ENCODE measurements at regions of chr22 and their contacts with region 1.

Region 1: DNA sequence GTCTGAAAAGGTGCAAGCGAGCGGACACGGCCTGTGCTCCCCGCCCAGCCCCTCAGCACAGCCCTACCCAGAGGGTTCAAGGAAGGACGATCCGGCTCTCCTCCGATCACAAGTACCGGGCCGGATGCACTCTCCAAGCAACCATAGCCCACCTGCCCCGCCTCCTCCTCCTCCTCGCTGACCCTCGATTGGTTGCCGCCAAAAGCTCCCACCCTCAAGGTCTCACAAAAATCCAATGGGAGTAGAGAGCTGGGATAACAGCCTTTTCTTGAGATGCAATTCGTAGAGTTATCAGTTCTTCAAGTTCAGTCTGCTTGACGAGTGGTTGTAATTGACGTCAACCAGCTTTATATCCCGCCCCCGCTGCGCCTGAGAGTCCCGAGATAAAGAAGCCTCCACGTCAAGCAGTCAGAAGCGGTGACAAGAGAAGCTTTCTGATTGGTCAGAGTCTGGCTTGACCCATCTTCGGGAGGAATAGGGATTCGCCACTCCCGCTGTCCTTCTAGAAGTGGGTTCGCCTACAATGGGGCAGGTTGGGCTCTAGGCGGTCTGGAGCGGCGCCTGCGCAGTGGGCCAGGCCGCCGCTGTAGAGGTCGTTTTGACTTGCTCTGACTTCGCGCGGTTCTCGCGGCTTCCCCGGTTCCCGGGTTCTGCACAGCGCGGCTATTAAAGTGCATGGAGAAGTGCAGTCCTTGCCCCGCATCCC is at the start of gene IFT27:
- DNase-seq: peak; percentile 100
- H3K4me3 ChIP-seq: peak within 1 kb of the TSS; percentile 69 to 93 (median 84)
- H3K27ac ChIP-seq: peak within 1 kb of the TSS; percentile 86 to 94 (median 86)
- H3K4me1 ChIP-seq: peaks cover 11 to 22% (median 20%) of the 10 kb centered on the region in 4 donors
- H3K27me3 ChIP-seq: no peaks in the 10 kb centered on the region
- CTCF ChIP-seq: no peak
- EP300 ChIP-seq: no peak
- POLR2A ChIP-seq: no peak
- total RNA-seq, gene IFT27: 15.2 to 24.1 (median 17.0) TPM

Region 2: DNA sequence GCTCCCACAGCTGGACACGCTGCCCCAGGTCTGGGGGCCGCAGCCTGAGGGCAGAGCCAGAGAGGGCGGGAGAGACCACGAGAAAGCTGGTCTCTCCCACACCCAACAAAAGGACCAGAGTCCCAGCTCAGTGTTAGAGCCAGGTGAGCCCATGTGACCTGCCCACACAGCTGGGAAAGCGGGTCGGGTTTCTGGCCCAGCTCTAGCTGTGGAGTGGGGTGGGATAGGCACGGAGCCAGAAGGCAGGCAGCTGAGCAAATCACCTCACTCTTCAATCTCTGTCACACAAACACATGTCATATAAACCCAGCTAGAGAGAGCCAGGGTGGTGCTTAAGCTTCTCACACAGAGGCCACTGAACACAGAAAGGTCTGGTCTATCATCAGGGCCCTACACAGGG is 239.4 kb before region 1 on chr22:
- intact Hi-C with region 1: loop called (anchors 10 kb)
- DNase-seq: no peak
- H3K4me3 ChIP-seq: no peak overlapping the region
- H3K27ac ChIP-seq: no peak overlapping the region
- H3K4me1 ChIP-seq: no peaks in the 10 kb centered on the region
- H3K27me3 ChIP-seq: peaks cover 0 to 31% (median 0%) of the 10 kb centered on the region in 4 donors
- CTCF ChIP-seq: no peak
- EP300 ChIP-seq: no peak
- POLR2A ChIP-seq: no peak

Region 3: DNA sequence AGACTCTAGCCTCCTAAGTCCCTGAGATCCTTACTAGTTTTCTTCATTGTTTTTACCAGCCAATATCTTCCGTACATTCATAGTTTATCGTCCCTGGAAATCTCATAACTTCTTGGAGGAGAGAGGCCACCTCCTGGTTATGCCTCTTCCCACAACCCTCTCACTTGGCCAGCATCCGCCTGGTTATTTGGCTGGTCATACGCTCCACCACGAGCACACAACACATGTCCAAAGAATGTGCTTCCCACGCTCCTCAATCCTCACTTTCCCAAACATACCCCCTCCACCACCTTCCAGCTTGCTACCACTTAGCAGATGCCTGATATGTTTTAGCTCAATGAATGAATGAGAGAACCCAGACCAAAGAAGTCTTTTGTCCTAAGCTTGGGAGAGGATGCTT is 163.7 kb before region 1 on chr22:
- intact Hi-C with region 1: no loop called
- DNase-seq: no peak
- H3K4me3 ChIP-seq: no peak overlapping the region
- H3K27ac ChIP-seq: no peak overlapping the region
- H3K4me1 ChIP-seq: peaks cover 0 to 3% (median 0%) of the 10 kb centered on the region in 4 donors
- H3K27me3 ChIP-seq: peaks cover 0 to 77% (median 6%) of the 10 kb centered on the region in 4 donors
- CTCF ChIP-seq: no peak
- EP300 ChIP-seq: no peak
- POLR2A ChIP-seq: no peak

Region 4: DNA sequence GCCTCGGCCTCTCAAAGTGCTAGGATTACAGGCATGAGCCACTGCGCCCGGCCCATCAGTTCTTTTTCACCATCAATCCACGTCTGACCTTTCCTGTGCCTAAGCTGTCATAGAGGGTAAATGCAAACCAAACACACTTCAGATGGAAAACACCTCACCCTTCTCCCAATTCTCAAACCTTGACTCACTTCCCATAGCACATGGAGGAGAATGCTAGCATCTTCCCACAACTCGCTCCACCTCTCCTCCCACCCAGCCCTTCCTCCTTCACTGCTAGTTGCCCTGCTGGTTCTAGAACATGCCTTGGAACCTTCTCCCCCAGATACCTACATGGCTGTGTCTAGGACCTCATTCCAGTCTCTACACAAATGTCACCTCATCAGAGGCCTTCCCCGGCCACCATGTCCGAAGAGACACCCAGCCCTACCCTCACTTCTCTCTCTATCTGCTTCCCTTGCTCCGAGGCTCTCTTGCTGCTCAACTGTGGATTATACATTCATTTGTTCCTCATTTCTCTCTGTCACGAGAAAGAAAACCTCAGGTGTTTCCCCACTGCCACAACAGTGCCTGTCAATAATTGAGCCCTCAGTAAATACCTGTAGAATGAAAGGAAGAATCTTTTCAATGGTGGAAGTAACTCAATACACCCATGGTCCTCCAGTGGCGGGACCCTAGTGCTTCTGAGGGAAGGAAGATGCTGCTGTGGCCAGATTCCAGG is 63.4 kb after region 1 on chr22:
- intact Hi-C with region 1: no loop called
- DNase-seq: no peak
- H3K4me3 ChIP-seq: no peak overlapping the region
- H3K27ac ChIP-seq: no peak overlapping the region
- H3K4me1 ChIP-seq: no peaks in the 10 kb centered on the region
- H3K27me3 ChIP-seq: peaks cover 0 to 41% (median 0%) of the 10 kb centered on the region in 4 donors
- CTCF ChIP-seq: no peak
- EP300 ChIP-seq: no peak
- POLR2A ChIP-seq: no peak

Region 5: DNA sequence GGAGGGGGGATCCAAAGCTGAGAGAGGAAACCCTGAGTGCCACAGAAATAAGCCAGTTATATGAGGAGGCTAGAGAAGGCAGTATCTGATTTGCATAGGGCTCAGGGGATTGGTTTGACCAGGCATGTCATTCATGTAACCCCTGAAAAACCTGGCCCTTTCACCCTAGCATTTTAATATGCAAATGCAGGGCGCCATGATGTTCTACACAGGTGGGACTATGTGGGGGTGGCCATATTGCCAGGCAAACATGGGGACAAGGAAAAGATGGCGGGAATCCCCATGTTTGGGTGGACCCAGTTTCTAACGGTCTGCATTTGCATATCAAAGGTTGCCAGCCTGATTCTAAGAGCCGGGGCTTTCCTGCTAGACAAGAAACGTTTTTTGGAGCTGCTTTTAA is 164.6 kb after region 1 on chr22:
- intact Hi-C with region 1: no loop called
- DNase-seq: no peak
- H3K4me3 ChIP-seq: no peak overlapping the region
- H3K27ac ChIP-seq: no peak overlapping the region
- H3K4me1 ChIP-seq: no peaks in the 10 kb centered on the region
- H3K27me3 ChIP-seq: peaks cover 0 to 18% (median 0%) of the 10 kb centered on the region in 4 donors
- CTCF ChIP-seq: no peak
- EP300 ChIP-seq: no peak
- POLR2A ChIP-seq: no peak

Region 6: DNA sequence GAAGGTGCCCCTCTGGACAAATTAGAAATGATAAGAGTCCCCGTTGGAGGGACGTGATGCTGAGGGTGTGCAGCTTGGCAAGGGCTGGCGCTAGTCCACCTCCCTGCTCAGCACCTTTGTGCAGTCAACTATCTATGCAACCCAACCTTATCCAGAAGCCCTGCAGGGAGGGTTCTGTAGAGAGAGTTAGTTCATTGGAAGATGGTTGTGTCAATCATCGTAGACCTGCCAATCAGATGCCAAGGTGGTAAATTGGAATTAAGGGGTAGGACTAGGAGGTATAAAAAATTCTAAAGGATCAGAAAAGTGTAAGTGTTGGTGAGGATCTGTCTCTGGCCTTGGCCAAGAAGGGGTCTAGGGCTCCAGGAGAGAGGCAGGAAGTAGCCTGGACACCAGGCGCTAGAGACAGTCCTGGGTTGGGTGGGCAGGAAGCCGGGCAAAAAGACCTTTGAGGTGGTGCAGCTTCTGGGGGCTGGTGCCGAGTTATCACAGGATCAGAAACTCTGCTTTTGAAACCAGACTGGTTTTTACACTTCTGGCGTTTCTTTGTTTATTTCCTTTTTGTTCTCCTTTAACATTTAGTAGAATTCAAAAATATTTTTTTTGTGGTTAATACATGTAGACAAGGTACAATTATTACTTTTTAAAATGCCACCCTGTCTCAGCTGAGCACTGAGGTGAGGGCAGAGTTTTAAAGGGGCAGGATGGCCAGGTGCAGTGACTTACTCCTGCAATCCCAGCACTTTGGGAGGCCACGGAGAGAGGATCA is 410.3 kb after region 1 on chr22:
- intact Hi-C with region 1: loop called (anchors 5 kb)
- DNase-seq: no peak
- H3K4me3 ChIP-seq: no peak overlapping the region
- H3K27ac ChIP-seq: peak overlapping the region; percentile 70 to 84 (median 77)
- H3K4me1 ChIP-seq: peaks cover 35 to 48% (median 36%) of the 10 kb centered on the region in 4 donors
- H3K27me3 ChIP-seq: no peaks in the 10 kb centered on the region
- CTCF ChIP-seq: no peak
- EP300 ChIP-seq: no peak
- POLR2A ChIP-seq: no peak